ENCODE measurements at regions of chr14 and their contacts with region 1.

Region 1: GRCh38 chr14:21014761-21015190 is 10.1 kb downstream of the NDRG2 start:
- DNase-seq: peak; percentile 79
- H3K4me3 Mint-ChIP-seq: no peak overlapping the region
- H3K27ac Mint-ChIP-seq: no peak overlapping the region
- H3K4me1 Mint-ChIP-seq: no peaks in the 10 kb centered on the region
- H3K27me3 Mint-ChIP-seq: peaks cover 19% of the 10 kb centered on the region

Region 2: GRCh38 chr14:20970983-20971704 is 43.6 kb before region 1 on chr14:
- CTCF ChIA-PET with region 1: interaction called, 17 read pairs
- POLR2A ChIA-PET with region 1: no interaction called
- DNase-seq: peak; percentile 82
- H3K4me3 Mint-ChIP-seq: peak overlapping the region; percentile 81
- H3K27ac Mint-ChIP-seq: no peak overlapping the region
- H3K4me1 Mint-ChIP-seq: peaks cover 9% of the 10 kb centered on the region
- H3K27me3 Mint-ChIP-seq: peaks cover 41% of the 10 kb centered on the region

Region 3: DNA sequence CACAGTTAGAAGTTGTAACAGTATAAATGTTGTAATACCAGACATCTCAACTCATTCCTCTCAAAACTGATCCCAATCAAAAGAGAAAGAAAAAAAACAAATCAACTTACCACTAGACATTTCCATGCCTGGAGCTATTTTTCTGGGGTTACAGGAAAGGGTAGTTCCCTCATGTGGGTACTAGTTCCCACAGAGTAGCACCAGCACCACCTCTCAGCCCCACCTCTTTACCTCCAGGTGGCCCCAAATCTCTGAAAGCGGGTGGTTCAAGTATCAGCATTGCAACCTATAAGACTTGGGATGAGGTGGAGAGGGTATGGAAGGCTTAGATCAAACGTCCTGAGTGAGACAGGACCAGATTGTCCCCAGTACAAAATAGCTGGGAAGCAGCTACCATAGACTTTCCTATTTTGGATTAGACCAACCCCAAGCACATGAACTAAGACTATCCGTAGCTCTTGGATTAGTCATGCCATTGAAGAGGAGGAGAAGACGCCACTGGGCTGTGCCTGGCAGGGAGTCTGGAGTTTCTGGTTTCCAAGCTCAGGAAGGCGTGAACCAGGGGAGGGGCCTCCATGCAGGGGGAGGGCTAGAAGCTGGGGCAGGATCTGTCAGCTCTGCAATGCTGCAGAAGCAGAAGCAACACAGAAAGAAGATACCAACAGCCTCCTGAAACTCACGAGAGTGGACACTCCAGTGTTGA is 16.0 kb before region 1 on chr14 and contains the start of gene SLC39A2:
- CTCF ChIA-PET with region 1: interaction called, 61 read pairs
- POLR2A ChIA-PET with region 1: interaction called, 4 read pairs
- DNase-seq: no peak
- H3K4me3 Mint-ChIP-seq: no peak within 1 kb of the TSS
- H3K27ac Mint-ChIP-seq: no peak within 1 kb of the TSS
- H3K4me1 Mint-ChIP-seq: peaks cover 14% of the 10 kb centered on the region
- H3K27me3 Mint-ChIP-seq: no peaks in the 10 kb centered on the region
- total RNA-seq, gene SLC39A2: not detected

Region 4: GRCh38 chr14:21024585-21025370 is 10.0 kb after region 1 on chr14 and contains the start of gene NDRG2:
- CTCF ChIA-PET with region 1: interaction called, 19 read pairs
- POLR2A ChIA-PET with region 1: no interaction called
- DNase-seq: peak; percentile 74
- H3K4me3 Mint-ChIP-seq: peak within 1 kb of the TSS; percentile 69
- H3K27ac Mint-ChIP-seq: no peak within 1 kb of the TSS
- H3K4me1 Mint-ChIP-seq: peaks cover 11% of the 10 kb centered on the region
- H3K27me3 Mint-ChIP-seq: peaks cover 34% of the 10 kb centered on the region
- total RNA-seq, gene NDRG2: 8.3 to 8.5 TPM

Region 5: GRCh38 chr14:21039585-21040369 is 25.0 kb after region 1 on chr14:
- CTCF ChIA-PET with region 1: interaction called, 60 read pairs
- POLR2A ChIA-PET with region 1: interaction called, 7 read pairs
- DNase-seq: no peak
- H3K4me3 Mint-ChIP-seq: no peak overlapping the region
- H3K27ac Mint-ChIP-seq: no peak overlapping the region
- H3K4me1 Mint-ChIP-seq: peaks cover 7% of the 10 kb centered on the region
- H3K27me3 Mint-ChIP-seq: peaks cover 12% of the 10 kb centered on the region

Region 6: DNA sequence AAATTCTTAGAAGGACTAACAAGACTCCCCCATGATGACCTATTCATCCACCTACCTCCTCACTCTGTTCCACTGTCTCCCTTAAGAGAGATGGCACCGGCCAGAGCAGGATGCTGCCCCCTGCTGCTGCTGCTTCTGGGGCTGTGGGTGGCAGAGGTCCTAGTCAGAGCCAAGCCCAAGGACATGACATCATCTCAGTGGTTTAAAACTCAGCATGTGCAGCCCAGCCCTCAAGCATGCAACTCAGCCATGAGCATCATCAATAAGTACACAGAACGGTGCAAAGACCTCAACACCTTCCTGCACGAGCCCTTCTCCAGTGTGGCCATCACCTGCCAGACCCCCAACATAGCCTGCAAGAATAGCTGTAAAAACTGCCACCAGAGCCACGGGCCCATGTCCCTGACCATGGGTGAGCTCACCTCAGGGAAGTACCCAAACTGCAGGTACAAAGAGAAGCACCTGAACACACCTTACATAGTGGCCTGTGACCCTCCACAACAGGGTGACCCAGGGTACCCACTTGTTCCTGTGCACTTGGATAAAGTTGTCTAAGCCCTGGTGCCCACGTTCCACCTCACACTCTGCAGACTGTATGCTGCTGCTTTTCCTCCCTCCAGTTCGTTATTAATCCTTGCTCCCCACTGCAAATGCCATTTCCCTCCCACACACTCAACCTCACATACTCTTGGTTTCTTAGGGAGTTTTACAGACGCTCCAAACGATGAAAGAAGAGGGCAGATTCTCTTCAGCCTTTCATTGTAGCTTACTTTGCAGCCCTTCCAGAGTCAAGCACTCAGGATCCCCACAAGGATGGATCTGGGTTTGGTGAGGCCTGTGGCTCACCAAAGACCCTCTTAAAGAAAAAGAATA is 43.3 kb after region 1 on chr14 and contains the start of gene RNASE8:
- CTCF ChIA-PET with region 1: interaction called, 10 read pairs
- POLR2A ChIA-PET with region 1: no interaction called
- DNase-seq: no peak
- H3K4me3 Mint-ChIP-seq: no peak within 1 kb of the TSS
- H3K27ac Mint-ChIP-seq: no peak within 1 kb of the TSS
- H3K4me1 Mint-ChIP-seq: peaks cover 8% of the 10 kb centered on the region
- H3K27me3 Mint-ChIP-seq: peaks cover 26% of the 10 kb centered on the region
- total RNA-seq, gene RNASE8: not detected

Region 7: DNA sequence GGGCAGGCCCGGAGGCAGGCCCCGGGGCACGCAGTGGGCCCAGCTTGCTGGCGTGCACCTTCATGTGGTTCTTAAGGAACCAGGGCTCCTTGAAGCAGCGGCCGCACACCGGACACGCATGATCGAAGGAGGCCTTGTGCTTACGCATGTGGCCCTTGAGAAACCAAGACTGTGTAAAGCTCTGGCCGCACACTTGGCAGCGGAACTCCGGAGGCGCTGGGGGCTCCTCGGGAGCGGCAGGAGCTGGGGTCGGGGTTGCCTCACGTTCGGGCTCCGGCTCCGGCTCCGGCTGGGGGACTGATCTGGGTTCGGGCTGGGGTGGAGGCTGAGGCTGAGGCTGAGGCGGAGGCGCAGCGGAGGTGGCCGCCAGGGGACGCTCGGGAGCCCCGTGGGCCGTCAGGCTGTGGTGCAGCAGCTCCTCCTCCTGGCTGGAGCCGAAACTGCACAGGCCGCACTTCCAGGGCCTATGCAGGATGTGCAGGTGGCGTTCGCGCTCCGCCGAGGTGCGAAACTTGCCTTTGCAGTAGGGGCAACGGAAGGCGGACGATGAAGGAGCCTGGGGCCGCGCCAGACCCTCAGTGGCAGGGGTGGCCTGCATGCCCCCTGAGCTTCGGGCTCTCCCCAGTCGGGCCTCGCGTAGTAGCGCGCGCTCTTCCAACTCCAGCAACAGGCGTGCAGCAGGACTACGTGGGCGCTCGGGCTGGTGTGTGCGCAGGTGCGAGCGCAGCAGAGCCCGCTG is 77.7 kb after region 1 on chr14:
- CTCF ChIA-PET with region 1: interaction called, 79 read pairs
- POLR2A ChIA-PET with region 1: interaction called, 7 read pairs
- DNase-seq: peak; percentile 90
- H3K4me3 Mint-ChIP-seq: no peak overlapping the region
- H3K27ac Mint-ChIP-seq: no peak overlapping the region
- H3K4me1 Mint-ChIP-seq: peaks cover 21% of the 10 kb centered on the region
- H3K27me3 Mint-ChIP-seq: peaks cover 8% of the 10 kb centered on the region

Region 8: GRCh38 chr14:21168055-21168454 is 153.3 kb after region 1 on chr14:
- CTCF ChIA-PET with region 1: no interaction called
- POLR2A ChIA-PET with region 1: no interaction called
- DNase-seq: no peak
- H3K4me3 Mint-ChIP-seq: no peak overlapping the region
- H3K27ac Mint-ChIP-seq: no peak overlapping the region
- H3K4me1 Mint-ChIP-seq: no peaks in the 10 kb centered on the region
- H3K27me3 Mint-ChIP-seq: peaks cover 37% of the 10 kb centered on the region

Measured in activated CD4-positive, alpha-beta memory T cell treated with anti-CD3 and anti-CD28 coated beads, Interleukin-2, amount 10 ng/mL, durations not matched to agents 7 days and 5 days (primary cell).